ENCODE measurements at regions of chr20 and their contacts with region 1.

Region 1: GRCh38 chr20:51800060-51800794 is 2.1 kb downstream of the SALL4 start:
- DNase-seq: peak; percentile 98 to 100
- H3K4me3 ChIP-seq: peak overlapping the region; percentile 54
- H3K4me3 Mint-ChIP-seq: peak overlapping the region; percentile 98
- H3K27ac Mint-ChIP-seq: peak overlapping the region; percentile 96
- H3K4me1 ChIP-seq: peaks cover 77% of the 10 kb centered on the region
- H3K4me1 Mint-ChIP-seq: peaks cover 78% of the 10 kb centered on the region
- H3K27me3 ChIP-seq: no peaks in the 10 kb centered on the region
- H3K27me3 Mint-ChIP-seq: no peaks in the 10 kb centered on the region
- CTCF ChIP-seq: peak; percentile 100

Region 2: DNA sequence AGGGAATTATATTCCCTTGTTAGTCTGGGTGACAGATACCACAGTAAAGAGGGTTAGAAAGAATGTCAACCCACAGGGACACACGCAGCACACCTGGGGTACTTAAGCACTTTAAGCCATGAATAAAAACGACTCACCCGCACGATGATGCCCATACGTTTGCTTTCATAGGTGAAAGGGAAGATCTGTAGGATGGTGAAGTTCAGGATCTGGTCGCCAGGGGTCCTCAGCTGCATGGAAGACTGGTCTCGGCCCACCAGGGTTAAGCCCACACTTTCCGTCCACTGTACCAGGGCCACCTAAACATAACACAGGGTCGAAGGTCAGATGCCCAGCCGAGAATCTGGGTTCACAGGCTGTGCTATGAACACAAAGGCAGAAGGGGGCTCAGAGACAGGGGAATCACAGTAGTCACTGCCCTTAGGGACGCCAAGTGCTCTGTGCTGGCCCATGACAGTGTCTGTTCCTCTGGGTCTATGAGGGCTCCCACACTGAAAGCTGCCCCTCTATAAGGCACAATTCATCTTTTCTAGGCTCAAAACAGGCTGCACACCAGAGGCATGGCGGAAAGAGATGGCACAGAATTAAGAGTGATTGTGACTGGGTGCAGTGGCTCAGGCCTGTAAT is 160.9 kb before region 1 on chr20:
- CTCF ChIA-PET with region 1: no interaction called
- POLR2A ChIA-PET with region 1: no interaction called
- intact Hi-C with region 1: loop called (anchors 1 kb)
- DNase-seq: peak; percentile 87 to 91
- H3K4me3 ChIP-seq: no peak overlapping the region
- H3K4me3 Mint-ChIP-seq: no peak overlapping the region
- H3K27ac Mint-ChIP-seq: peak overlapping the region; percentile 26
- H3K4me1 ChIP-seq: no peaks in the 10 kb centered on the region
- H3K4me1 Mint-ChIP-seq: peaks cover 6% of the 10 kb centered on the region
- H3K27me3 ChIP-seq: no peaks in the 10 kb centered on the region
- H3K27me3 Mint-ChIP-seq: no peaks in the 10 kb centered on the region
- CTCF ChIP-seq: peak; percentile 99 to 100

Region 3: DNA sequence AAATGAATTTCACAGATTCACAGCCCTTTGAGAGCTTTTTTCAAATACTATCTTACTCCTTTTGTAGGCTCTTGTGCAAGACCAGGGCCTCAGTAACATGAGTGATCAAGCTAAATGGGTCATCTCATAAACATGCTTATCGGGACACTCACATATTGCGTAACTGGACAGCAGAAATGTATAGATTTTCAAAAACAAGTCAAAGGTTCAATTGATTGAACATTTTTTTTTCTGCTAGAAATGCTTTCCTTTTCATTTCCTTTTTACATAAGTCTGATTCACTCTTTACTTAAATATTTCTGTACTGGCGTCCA is 10.8 kb after region 1 on chr20:
- CTCF ChIA-PET with region 1: interaction called, 12 read pairs
- POLR2A ChIA-PET with region 1: interaction called, 5 read pairs
- intact Hi-C with region 1: no loop called
- DNase-seq: peak; percentile 45 to 56
- H3K4me3 ChIP-seq: no peak overlapping the region
- H3K4me3 Mint-ChIP-seq: no peak overlapping the region
- H3K27ac Mint-ChIP-seq: peak overlapping the region; percentile 32
- H3K4me1 ChIP-seq: peaks cover 36% of the 10 kb centered on the region
- H3K4me1 Mint-ChIP-seq: peaks cover 35% of the 10 kb centered on the region
- H3K27me3 ChIP-seq: no peaks in the 10 kb centered on the region
- H3K27me3 Mint-ChIP-seq: no peaks in the 10 kb centered on the region
- CTCF ChIP-seq: no peak

Region 4: DNA sequence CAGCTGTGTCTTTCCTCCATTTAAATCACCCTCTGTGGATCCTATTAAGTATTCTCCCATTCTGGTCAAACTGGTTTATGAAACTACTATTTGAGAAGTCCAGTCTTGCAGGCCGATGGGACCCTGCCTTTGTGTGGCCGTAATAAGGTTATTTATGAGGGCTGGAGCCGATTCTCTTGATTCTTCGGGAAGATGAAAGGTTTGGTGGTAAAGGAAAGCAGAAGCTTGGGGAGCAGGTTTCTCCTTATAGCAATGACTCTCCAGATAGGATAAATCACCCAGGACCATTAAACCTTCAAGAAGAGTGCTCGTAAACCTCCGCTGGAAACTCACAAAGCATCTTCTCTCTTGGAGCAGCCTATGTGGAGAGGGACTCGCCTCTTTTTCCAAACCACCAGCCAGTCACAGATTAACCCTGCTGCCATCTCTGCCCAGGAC is 71.7 kb after region 1 on chr20:
- CTCF ChIA-PET with region 1: interaction called, 11 read pairs
- POLR2A ChIA-PET with region 1: interaction called, 3 read pairs
- intact Hi-C with region 1: loop called (anchors 1 kb)
- DNase-seq: peak; percentile 94 to 96
- H3K4me3 ChIP-seq: no peak overlapping the region
- H3K4me3 Mint-ChIP-seq: peak overlapping the region; percentile 62
- H3K27ac Mint-ChIP-seq: peak overlapping the region; percentile 82
- H3K4me1 ChIP-seq: peaks cover 21% of the 10 kb centered on the region
- H3K4me1 Mint-ChIP-seq: peaks cover 35% of the 10 kb centered on the region
- H3K27me3 ChIP-seq: no peaks in the 10 kb centered on the region
- H3K27me3 Mint-ChIP-seq: no peaks in the 10 kb centered on the region
- CTCF ChIP-seq: no peak

Region 5: GRCh38 chr20:51918016-51918415 is 117.8 kb after region 1 on chr20:
- CTCF ChIA-PET with region 1: interaction called, 11 read pairs
- POLR2A ChIA-PET with region 1: interaction called, 4 read pairs
- intact Hi-C with region 1: no loop called
- DNase-seq: peak; percentile 69 to 71
- H3K4me3 ChIP-seq: no peak overlapping the region
- H3K4me3 Mint-ChIP-seq: peak overlapping the region; percentile 68
- H3K27ac Mint-ChIP-seq: peak overlapping the region; percentile 89
- H3K4me1 ChIP-seq: peaks cover 32% of the 10 kb centered on the region
- H3K4me1 Mint-ChIP-seq: peaks cover 33% of the 10 kb centered on the region
- H3K27me3 ChIP-seq: no peaks in the 10 kb centered on the region
- H3K27me3 Mint-ChIP-seq: no peaks in the 10 kb centered on the region
- CTCF ChIP-seq: no peak

Region 6: DNA sequence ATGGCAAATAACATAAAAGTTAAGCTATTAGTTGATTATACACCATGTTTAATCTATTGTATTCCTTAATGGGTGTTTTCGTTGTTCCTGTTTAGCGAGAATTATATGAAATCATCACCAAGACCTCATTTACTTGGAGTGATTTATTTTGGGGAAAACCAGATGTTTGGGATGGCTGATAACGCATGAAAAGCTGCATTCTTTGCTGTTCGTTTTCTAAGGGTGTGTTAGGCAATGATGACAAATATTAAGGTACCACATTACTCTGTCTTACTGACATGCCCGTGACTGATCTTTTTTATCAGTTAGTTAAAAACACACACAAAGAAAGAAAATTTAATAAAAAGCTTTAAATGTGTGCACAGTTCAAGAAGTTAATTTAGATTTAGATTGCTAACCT is 214.9 kb after region 1 on chr20:
- CTCF ChIA-PET with region 1: interaction called, 14 read pairs
- POLR2A ChIA-PET with region 1: no interaction called
- intact Hi-C with region 1: loop called (anchors 5 kb)
- DNase-seq: peak in 1 of 2 experiments; percentile 63
- H3K4me3 ChIP-seq: no peak overlapping the region
- H3K4me3 Mint-ChIP-seq: peak overlapping the region; percentile 6
- H3K27ac Mint-ChIP-seq: peak overlapping the region; percentile 12
- H3K4me1 ChIP-seq: peaks cover 31% of the 10 kb centered on the region
- H3K4me1 Mint-ChIP-seq: peaks cover 36% of the 10 kb centered on the region
- H3K27me3 ChIP-seq: no peaks in the 10 kb centered on the region
- H3K27me3 Mint-ChIP-seq: no peaks in the 10 kb centered on the region
- CTCF ChIP-seq: no peak

Region 7: DNA sequence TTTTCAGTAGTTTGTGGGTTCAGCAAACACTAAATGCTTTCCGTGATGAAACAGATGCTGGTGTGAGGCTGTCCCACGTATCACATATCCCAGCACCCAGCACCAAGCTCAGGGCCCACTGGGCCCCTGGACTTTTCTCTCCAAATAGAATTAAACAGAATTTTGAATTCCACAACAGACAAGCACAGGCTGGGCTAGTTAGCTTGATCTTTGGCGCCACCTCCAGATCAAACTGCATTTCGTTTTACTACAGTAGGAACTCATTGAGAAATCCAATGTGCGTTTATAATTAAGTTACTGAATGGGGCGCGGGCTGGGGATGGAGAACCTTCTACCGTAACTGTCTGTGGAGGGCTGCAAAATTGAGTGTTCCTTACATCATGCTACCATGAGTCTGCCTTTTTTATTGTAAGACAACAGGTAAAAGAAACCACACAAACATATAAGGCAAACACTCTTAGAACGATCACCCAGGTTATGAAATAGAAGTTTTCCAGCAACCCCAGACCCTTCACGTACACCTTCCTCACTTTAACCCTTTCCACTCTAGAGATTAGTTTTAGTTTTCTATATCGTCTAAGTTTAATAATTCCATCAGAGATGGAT is 283.5 kb after region 1 on chr20:
- CTCF ChIA-PET with region 1: interaction called, 22 read pairs
- POLR2A ChIA-PET with region 1: no interaction called
- intact Hi-C with region 1: loop called (anchors 1 kb)
- DNase-seq: peak; percentile 86 to 87
- H3K4me3 ChIP-seq: no peak overlapping the region
- H3K4me3 Mint-ChIP-seq: no peak overlapping the region
- H3K27ac Mint-ChIP-seq: peak overlapping the region; percentile 23
- H3K4me1 ChIP-seq: peaks cover 11% of the 10 kb centered on the region
- H3K4me1 Mint-ChIP-seq: peaks cover 28% of the 10 kb centered on the region
- H3K27me3 ChIP-seq: no peaks in the 10 kb centered on the region
- H3K27me3 Mint-ChIP-seq: no peaks in the 10 kb centered on the region
- CTCF ChIP-seq: peak; percentile 95 to 96